Activated naive CD4-positive, alpha-beta T cell treated with anti-CD3 and anti-CD28 coated beads, Interleukin-2, amount 10 ng/mL, durations not matched to agents 7 days and 5 days (primary cell): ENCODE measurements at regions of chr22 and their contacts with region 1.

Region 1: DNA sequence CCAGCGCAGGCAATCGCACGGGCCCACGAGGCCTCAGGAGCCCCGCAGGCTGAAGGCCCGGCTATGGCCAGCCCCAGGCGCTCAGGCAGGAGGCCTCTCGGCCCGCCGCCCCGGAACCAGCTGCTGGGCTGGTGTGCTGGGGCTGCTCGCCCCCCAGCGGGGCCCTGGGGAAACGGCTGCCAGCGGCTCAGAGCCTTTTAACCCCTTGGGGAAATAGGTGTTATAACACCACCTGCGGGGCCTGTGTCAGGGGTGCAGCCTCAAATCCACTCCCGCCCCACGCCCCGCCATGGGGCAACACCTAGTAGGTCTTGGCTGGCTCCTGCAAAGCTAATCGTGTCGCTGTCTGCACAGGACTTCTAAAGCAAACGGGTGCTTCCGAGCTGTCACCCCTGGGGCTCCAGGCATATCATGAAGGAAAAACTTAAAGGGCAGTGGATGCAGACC is 237.4 kb downstream of the TTC28 start:
- DNase-seq: peak; percentile 86
- H3K4me3 Mint-ChIP-seq: peak overlapping the region; percentile 72
- H3K27ac Mint-ChIP-seq: no peak overlapping the region
- H3K4me1 Mint-ChIP-seq: peaks cover 32% of the 10 kb centered on the region
- H3K27me3 Mint-ChIP-seq: peaks cover 33% of the 10 kb centered on the region

Region 2: DNA sequence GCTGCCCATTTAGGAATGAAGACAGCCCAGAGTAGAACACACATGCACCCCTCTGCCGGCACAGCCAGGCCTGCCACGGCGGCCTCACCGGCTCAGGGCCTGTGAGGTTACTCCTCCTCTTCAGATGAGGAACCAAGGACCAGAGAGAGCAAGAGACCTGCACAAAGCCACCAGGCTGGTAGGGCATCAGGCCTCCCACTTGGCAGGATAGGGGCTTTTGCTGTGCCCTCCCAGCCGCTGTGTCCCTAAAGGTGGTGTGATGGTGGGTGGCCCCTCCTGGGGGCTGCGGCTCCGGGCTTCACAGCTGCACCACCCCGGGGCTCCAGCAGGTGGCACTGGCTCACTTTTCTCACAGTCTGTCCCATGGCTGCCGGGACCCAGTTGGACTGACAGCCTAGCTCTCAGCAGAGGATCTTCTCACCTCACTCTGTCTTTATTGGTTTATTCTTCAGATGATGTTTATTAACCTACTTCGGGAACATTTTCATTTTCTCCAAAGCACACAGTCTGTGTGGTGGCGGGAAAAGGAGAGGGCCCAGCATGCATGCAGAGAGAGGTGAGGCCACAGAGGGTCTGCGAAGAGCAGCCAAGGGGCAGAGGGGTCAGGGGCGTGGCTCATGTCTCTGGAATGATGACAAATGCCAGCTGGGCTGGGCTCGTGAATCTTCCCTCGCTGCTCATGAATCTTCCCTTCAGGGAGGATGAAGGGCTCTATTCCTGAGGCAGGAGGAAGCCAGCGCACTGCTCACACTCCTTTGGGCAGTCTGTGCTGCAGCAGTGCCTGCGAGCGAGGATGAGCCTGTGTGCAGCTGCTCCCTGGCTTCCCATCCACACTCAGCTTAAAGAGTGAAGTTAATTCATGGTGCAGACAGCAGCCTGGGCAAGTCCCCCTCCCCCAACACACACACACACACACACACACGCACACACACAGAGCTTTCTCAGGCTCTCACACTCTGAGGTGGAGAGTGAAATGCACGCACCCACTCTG is 422.1 kb before region 1 on chr22:
- CTCF ChIA-PET with region 1: interaction called, 32 read pairs
- DNase-seq: peak; percentile 75
- H3K4me3 Mint-ChIP-seq: no peak overlapping the region
- H3K27ac Mint-ChIP-seq: no peak overlapping the region
- H3K4me1 Mint-ChIP-seq: peaks cover 5% of the 10 kb centered on the region
- H3K27me3 Mint-ChIP-seq: no peaks in the 10 kb centered on the region

Region 3: DNA sequence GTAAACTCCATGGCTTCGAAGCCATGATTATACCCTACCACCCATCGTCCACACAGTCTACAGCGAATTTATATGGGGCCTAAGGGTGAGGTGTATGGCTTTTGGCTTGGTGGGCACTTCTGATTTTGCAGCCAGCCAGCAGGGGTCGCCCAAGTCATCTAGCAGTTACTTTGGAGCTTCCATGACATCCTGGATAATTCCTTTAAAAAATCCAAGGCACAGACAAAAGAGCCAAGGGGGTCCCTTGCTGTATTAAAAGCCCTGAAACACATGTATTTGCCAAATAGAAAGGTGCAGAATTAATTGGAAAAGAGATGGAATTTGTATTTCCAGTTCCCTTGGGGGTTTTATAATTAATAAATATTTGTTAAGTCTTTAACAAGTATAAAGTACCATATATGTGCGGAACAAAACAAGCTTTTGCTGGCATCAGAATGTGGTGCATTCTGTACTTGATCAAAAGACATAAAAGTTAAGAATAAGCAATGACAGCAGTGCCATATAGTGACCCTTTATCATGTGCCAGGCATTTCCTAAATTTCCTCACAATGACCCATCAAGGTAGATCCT is 390.4 kb before region 1 on chr22:
- CTCF ChIA-PET with region 1: interaction called, 30 read pairs
- DNase-seq: peak; percentile 56
- H3K4me3 Mint-ChIP-seq: no peak overlapping the region
- H3K27ac Mint-ChIP-seq: no peak overlapping the region
- H3K4me1 Mint-ChIP-seq: no peaks in the 10 kb centered on the region
- H3K27me3 Mint-ChIP-seq: peaks cover 11% of the 10 kb centered on the region

Region 4: DNA sequence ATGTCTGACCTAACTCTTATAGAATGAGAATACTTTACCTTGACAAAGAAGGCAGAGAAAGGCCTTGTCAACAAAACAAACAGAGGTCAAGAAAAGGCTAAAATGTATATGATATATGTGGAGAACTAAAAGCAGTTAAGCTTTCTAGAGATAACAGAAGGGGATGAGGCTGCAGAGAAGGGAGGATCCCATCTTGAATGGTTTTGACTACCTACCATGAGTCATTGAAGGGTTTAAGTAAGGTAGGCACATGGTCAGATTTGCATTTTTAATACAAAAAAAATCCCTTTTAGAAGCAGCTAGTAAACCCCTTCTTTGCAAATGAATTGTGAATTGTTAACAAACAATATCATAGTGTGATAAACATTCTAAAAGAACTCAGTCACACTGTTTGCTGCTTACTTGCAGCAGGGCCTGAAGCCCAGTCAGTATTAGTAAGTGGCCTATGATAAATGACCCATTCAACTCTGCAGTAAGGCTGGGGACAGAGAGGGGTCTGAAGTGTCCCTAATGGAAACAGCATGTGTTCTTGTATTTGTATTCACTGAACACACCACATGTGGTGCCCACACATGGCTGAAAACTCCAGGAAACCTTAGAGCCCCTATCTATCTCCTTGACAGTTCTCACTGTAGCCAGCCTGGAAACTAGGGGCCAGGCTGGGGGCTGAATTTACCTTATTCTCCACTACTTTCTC is 194.5 kb before region 1 on chr22:
- CTCF ChIA-PET with region 1: interaction called, 76 read pairs
- DNase-seq: no peak
- H3K4me3 Mint-ChIP-seq: no peak overlapping the region
- H3K27ac Mint-ChIP-seq: no peak overlapping the region
- H3K4me1 Mint-ChIP-seq: no peaks in the 10 kb centered on the region
- H3K27me3 Mint-ChIP-seq: no peaks in the 10 kb centered on the region